ENCODE measurements at regions of chr1 and their contacts with region 1.

Region 1: GRCh38 chr1:6199298-6200187 is at the start of gene RPL22:
- DNase-seq: peak; percentile 96
- ATAC-seq: peak; percentile 97
- H3K4me3 ChIP-seq: peak within 1 kb of the TSS; percentile 86 to 96
- H3K27ac ChIP-seq: peak within 1 kb of the TSS; percentile 99
- H3K4me1 ChIP-seq: peaks cover 15% of the 10 kb centered on the region
- H3K27me3 ChIP-seq: no peaks in the 10 kb centered on the region
- CTCF ChIP-seq: no peak
- total RNA-seq, gene RPL22: 309 TPM

Region 2: DNA sequence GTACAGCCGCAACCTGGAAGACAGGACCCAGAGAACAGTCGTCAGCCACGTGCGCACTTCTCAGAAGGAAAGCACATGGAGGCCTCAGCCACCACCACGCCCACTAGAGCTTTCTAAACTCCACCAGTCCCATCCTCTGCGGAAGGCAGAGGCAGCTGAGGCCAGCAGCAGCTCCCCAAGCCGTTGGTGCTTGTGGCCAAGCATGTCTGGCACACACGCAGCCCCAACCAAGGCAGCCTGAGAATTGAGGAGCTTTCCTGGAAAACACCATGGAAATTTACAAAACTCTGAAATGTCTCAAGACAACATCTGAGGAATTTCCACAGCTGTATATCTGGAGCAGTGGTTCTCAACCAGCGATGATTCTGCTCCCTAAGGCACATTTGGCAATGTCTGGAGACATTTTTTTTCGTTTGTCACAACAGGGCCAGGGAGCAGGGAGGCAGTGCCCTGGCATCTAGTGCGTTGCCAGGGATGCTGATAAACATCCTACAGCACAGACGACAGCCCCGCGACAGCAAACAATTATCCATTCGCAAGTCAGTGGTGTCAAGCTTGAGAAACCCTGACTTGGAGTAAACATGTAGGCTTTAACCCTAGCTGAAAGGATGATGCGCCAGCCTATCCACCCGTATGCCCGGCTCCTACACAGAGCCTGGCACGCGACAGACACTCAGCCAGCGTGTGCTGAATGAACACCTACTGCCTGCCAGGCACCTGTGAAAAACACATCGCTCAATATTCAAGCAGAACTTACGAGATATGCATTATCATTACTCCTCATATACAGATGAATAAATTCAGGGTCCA is 232.0 kb before region 1 on chr1:
- CTCF ChIA-PET with region 1: no interaction called
- POLR2A ChIA-PET with region 1: no interaction called
- in situ Hi-C with region 1: no loop called
- intact Hi-C with region 1: no loop called
- DNase-seq: no peak
- ATAC-seq: no peak
- H3K4me3 ChIP-seq: no peak overlapping the region
- H3K27ac ChIP-seq: no peak overlapping the region
- H3K4me1 ChIP-seq: no peaks in the 10 kb centered on the region
- H3K27me3 ChIP-seq: no peaks in the 10 kb centered on the region
- CTCF ChIP-seq: no peak

Region 3: GRCh38 chr1:6001992-6002576 is 197.5 kb before region 1 on chr1:
- CTCF ChIA-PET with region 1: no interaction called
- POLR2A ChIA-PET with region 1: no interaction called
- in situ Hi-C with region 1: no loop called
- intact Hi-C with region 1: no loop called
- DNase-seq: no peak
- ATAC-seq: peak; percentile 20; the same call in 1 of the 2 replicates
- H3K4me3 ChIP-seq: no peak overlapping the region
- H3K27ac ChIP-seq: no peak overlapping the region
- H3K4me1 ChIP-seq: peaks cover 5% of the 10 kb centered on the region; the same call in 1 of the 2 replicates
- H3K27me3 ChIP-seq: no peaks in the 10 kb centered on the region
- CTCF ChIP-seq: no peak

Region 4: GRCh38 chr1:6052543-6053205 is 146.9 kb before region 1 on chr1:
- CTCF ChIA-PET with region 1: no interaction called
- POLR2A ChIA-PET with region 1: interaction called, 14 read pairs
- in situ Hi-C with region 1: no loop called
- intact Hi-C with region 1: no loop called
- DNase-seq: peak; percentile 18
- ATAC-seq: peak; percentile 68
- H3K4me3 ChIP-seq: no peak overlapping the region
- H3K27ac ChIP-seq: no peak overlapping the region
- H3K4me1 ChIP-seq: no peaks in the 10 kb centered on the region
- H3K27me3 ChIP-seq: no peaks in the 10 kb centered on the region
- CTCF ChIP-seq: peak; percentile 82

Region 5: DNA sequence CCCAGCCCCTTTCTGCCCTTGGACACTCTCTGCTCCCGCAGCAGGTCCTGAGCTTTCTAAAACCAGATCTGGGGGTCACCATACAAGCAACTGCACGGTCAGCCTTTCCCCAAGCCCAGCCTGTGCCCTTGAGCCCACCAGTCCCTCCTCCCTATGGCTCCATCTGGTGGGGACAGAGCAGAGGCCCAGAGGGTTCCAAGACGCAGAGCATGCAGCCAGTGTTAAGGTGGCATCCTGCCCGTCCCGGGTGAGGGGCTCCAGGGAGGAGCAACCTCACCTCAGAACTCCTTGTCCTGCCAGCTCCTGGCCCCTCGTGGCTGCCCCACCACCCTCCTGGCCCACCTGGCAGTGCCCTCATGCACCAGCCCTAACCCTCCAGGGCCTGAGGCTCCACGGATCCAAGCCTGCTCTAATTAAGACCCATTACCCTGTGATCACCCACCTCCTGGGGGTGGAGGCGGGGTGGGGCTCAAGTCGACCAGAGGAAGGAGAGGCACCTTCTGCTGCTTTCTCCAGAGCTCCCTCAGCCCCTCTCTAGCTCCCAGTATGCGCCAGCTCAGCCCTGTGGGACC is 27.9 kb before region 1 on chr1:
- CTCF ChIA-PET with region 1: no interaction called
- POLR2A ChIA-PET with region 1: no interaction called
- in situ Hi-C with region 1: no loop called
- intact Hi-C with region 1: no loop called
- DNase-seq: no peak
- ATAC-seq: peak; percentile 78
- H3K4me3 ChIP-seq: no peak overlapping the region
- H3K27ac ChIP-seq: peak overlapping the region; percentile 76
- H3K4me1 ChIP-seq: peaks cover 37% of the 10 kb centered on the region
- H3K27me3 ChIP-seq: no peaks in the 10 kb centered on the region
- CTCF ChIP-seq: peak; percentile 60

Region 6: DNA sequence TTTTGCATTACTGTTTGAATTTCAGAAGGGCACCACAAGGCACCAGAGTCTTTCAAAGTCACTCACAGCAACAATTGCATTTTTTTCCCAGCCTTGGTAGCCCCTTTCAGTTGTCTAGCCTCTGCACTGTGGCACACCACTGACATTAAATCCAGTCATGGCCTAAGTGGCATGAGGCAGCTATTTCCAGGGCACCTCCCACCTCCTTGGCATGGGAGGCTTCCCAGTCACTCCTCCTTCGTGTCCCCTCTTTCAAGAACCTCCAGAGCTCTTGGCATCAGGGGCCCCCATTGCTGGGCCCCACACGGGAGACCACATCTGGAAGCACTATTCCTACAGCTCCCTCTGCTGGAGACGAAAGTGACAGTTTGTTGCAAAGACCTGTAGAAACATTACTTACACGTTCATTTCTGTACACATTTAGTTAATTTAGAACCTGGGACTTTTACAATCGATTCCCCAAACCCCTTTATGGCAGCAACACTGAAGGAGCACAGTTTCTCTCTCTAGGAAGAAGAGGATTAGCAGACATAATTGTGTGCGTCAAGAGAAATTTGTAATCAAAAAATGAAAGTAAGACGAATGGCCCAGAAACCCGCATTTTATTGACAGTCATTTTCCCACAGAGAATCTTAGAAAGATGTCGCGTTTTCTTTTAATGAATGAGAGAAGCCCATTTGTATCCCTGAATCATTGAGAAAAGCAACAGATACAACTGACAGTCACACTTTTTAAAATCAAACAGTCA is 13.7 kb before region 1 on chr1:
- CTCF ChIA-PET with region 1: interaction called, 20 read pairs
- POLR2A ChIA-PET with region 1: interaction called, 5 read pairs
- in situ Hi-C with region 1: no loop called
- intact Hi-C with region 1: no loop called
- DNase-seq: no peak
- ATAC-seq: no peak
- H3K4me3 ChIP-seq: no peak overlapping the region
- H3K27ac ChIP-seq: peak overlapping the region; percentile 32; the same call in 1 of the 2 replicates
- H3K4me1 ChIP-seq: peaks cover 51% of the 10 kb centered on the region
- H3K27me3 ChIP-seq: no peaks in the 10 kb centered on the region
- CTCF ChIP-seq: peak; percentile 85

Region 7: DNA sequence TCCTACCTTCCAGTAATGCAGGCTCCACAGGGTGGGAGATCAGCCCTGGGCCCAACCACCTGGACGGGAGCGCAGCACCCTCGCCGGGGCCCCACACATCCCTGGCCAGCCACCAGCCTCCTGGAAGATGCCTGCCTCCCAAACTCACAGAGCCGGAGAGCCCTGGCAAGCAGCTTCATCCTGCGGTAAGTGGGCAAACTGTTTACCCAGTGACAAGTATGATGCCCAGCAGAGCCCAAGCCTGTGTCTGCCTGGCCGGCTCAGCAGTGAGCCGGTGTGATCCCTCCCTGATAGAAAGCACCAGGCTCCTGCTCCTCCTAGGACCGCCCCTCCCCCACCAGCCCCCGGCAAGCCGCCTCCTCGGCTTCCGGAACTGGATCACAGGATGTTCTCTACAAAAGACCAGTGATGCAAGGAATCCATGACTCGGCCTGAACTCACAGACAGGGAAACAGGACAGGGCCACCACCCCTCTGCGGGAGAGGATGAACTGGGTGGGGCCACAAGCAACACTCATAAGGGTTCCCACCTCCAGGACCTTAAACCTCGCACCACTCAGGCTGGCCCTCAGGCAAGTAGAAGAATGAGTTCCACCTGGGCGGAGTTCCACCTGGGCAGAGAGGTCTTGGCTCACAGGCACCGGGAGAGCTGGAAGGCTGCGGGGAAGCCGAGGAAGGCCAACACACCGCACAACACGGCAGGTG is 186.1 kb after region 1 on chr1:
- CTCF ChIA-PET with region 1: no interaction called
- POLR2A ChIA-PET with region 1: no interaction called
- in situ Hi-C with region 1: no loop called
- intact Hi-C with region 1: no loop called
- DNase-seq: peak; percentile 56
- ATAC-seq: peak; percentile 84
- H3K4me3 ChIP-seq: peak overlapping the region; percentile 25 to 54
- H3K27ac ChIP-seq: peak overlapping the region; percentile 90
- H3K4me1 ChIP-seq: peaks cover 28% of the 10 kb centered on the region
- H3K27me3 ChIP-seq: no peaks in the 10 kb centered on the region
- CTCF ChIP-seq: no peak